Naive thymus-derived CD4-positive, alpha-beta T cell (primary cell): ENCODE measurements at regions of chr4 and their contacts with region 1.

Region 1: DNA sequence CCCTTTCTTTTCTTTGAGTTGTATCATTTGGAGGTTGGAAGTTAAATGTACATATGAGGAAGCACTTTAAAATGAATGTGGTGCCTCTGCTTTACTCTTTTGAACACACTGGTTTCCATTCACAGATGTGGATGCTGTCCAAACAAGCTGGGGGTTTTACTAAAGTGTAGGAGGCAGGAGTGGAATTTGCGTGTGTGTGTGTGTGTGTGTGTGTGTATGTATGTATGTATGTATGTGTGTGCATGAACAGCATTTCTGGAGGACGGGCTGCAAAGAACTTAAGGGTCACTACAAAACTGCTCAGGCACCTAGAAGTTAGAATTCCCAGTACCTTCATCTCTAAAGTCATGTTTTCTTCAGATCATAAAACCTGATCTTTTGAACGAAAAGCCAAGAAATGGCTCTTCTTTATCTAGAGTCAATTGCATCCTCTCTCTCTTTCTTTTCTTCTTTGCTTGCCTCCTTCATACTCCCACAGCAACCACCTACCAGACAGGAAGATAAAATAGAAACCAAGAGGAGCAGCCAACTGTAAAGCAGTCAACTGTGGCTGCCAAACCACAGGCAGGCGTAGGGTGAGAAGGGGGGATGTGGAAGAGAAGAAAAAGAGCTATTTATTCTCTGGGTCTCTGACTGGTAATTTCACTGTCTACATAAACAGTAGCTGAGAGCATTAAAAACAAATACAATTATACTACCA is 177.0 kb upstream of the RASGEF1B start:
- DNase-seq: peak in 8 of 9 donors; percentile 45 to 71 (median 54)
- ATAC-seq: peak; percentile 93
- H3K4me3 ChIP-seq: no peak overlapping the region
- H3K4me3 Mint-ChIP-seq: peak overlapping the region in 9 of 10 donors; percentile 45 to 71 (median 54)
- H3K27ac ChIP-seq: peak overlapping the region; percentile 0
- H3K27ac Mint-ChIP-seq: peak overlapping the region; percentile 33 to 80 (median 64)
- H3K4me1 ChIP-seq: peaks cover 12 to 16% of the 10 kb centered on the region in 2 donors
- H3K4me1 Mint-ChIP-seq: peaks cover 25 to 59% (median 48%) of the 10 kb centered on the region in 7 donors
- H3K27me3 ChIP-seq: no peaks in the 10 kb centered on the region
- H3K27me3 Mint-ChIP-seq: no peaks in the 10 kb centered on the region

Region 2: GRCh38 chr4:81562093-81562492 is 86.6 kb before region 1 on chr4:
- CTCF ChIA-PET with region 1: no interaction called
- POLR2A ChIA-PET with region 1: no interaction called
- intact Hi-C with region 1: loop called in 1 of 2 experiments (anchors 5 kb)
- DNase-seq: peak in 7 of 9 donors; percentile 28 to 50 (median 40)
- ATAC-seq: peak; percentile 94
- H3K4me3 ChIP-seq: no peak overlapping the region
- H3K4me3 Mint-ChIP-seq: peak overlapping the region in 7 of 10 donors; percentile 27 to 64 (median 55)
- H3K27ac ChIP-seq: peak overlapping the region; percentile 42
- H3K27ac Mint-ChIP-seq: peak overlapping the region; percentile 5 to 86 (median 77)
- H3K4me1 ChIP-seq: peaks cover 0 to 5% of the 10 kb centered on the region in 2 donors
- H3K4me1 Mint-ChIP-seq: peaks cover 7 to 14% (median 13%) of the 10 kb centered on the region in 7 donors
- H3K27me3 ChIP-seq: no peaks in the 10 kb centered on the region
- H3K27me3 Mint-ChIP-seq: no peaks in the 10 kb centered on the region

Region 3: DNA sequence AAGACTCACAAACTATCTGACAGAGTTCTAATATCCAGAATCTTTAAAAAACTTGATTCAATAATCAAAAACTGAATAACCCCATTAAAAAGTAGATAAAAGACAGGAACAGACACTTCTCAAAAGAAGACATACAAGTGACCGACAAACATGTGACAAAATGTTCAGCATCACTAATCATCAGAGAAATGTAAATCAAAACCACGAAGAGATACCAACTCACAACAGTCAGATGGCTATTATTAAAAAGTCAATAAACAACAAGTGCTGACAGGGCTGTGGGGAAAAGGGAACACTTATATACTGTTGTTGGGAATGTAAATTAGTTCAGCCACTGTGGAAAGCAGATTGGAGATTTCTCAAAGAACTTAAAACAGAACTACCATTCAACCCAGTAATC is 38.9 kb before region 1 on chr4:
- CTCF ChIA-PET with region 1: no interaction called
- POLR2A ChIA-PET with region 1: no interaction called
- intact Hi-C with region 1: no loop called
- DNase-seq: no peak
- ATAC-seq: no peak
- H3K4me3 ChIP-seq: no peak overlapping the region
- H3K4me3 Mint-ChIP-seq: no peak overlapping the region
- H3K27ac ChIP-seq: no peak overlapping the region
- H3K27ac Mint-ChIP-seq: no peak overlapping the region
- H3K4me1 ChIP-seq: peaks cover 0 to 4% of the 10 kb centered on the region in 2 donors
- H3K4me1 Mint-ChIP-seq: peaks cover 0 to 21% (median 9%) of the 10 kb centered on the region in 7 donors
- H3K27me3 ChIP-seq: no peaks in the 10 kb centered on the region
- H3K27me3 Mint-ChIP-seq: no peaks in the 10 kb centered on the region

Region 4: DNA sequence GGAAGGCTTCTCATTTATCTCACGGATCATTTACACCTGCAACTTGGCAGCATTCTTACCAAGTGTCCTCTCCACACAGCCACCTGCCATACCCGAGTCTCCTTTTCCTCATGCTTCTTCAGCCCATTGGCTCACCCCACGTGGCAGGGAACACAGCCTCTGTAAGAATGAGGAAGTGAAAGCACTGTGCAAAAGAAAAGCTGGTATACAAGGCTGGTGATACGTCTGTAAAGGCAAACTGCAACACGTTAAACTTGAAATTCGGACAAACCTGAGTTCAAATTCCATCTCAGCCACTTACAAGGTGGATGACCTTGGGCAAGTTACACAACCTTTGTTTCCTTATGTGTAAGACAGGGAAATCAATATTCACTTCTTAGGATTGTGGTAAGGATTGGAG is 13.0 kb before region 1 on chr4:
- CTCF ChIA-PET with region 1: no interaction called
- POLR2A ChIA-PET with region 1: interaction called, 3 read pairs
- intact Hi-C with region 1: loop called in 1 of 2 experiments (anchors 2 kb)
- DNase-seq: no peak
- ATAC-seq: peak; percentile 65
- H3K4me3 ChIP-seq: no peak overlapping the region
- H3K4me3 Mint-ChIP-seq: peak overlapping the region in 3 of 10 donors; percentile 26 to 71 (median 38)
- H3K27ac ChIP-seq: no peak overlapping the region
- H3K27ac Mint-ChIP-seq: peak overlapping the region in 1 of 9 donors; percentile 28
- H3K4me1 ChIP-seq: no peaks in the 10 kb centered on the region
- H3K4me1 Mint-ChIP-seq: peaks cover 0 to 5% (median 0%) of the 10 kb centered on the region in 7 donors
- H3K27me3 ChIP-seq: no peaks in the 10 kb centered on the region
- H3K27me3 Mint-ChIP-seq: no peaks in the 10 kb centered on the region

Region 5: DNA sequence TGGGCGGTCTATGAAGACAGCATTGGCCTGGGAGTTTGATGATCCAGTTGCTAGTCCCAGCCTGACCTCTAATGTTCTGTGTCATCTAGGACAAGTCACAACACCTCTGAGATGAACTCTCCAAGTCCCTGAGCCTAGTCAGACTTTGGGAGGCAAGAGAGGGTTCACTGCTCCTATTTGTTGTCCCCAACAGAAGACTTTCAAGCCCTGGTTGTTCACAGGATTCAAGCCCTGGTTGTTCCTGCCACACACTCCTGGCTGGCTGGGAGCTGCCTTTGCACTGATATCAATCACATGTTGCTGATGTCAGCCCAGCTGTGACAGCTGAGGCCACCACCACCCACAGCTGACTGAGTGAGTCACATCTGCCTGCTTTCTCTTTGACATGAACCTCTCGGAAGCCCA is 76.2 kb after region 1 on chr4:
- CTCF ChIA-PET with region 1: no interaction called
- POLR2A ChIA-PET with region 1: no interaction called
- intact Hi-C with region 1: loop called in 1 of 2 experiments (anchors 5 kb)
- DNase-seq: peak in 1 of 9 donors; percentile 63
- ATAC-seq: peak; percentile 80
- H3K4me3 ChIP-seq: no peak overlapping the region
- H3K4me3 Mint-ChIP-seq: no peak overlapping the region
- H3K27ac ChIP-seq: no peak overlapping the region
- H3K27ac Mint-ChIP-seq: peak overlapping the region in 3 of 9 donors; percentile 49 to 89 (median 56)
- H3K4me1 ChIP-seq: peaks cover 0 to 6% of the 10 kb centered on the region in 2 donors
- H3K4me1 Mint-ChIP-seq: peaks cover 6 to 22% (median 14%) of the 10 kb centered on the region in 7 donors
- H3K27me3 ChIP-seq: no peaks in the 10 kb centered on the region
- H3K27me3 Mint-ChIP-seq: peaks cover 0 to 11% (median 9%) of the 10 kb centered on the region in 5 donors